K562 (cell line): ENCODE measurements at regions of chr1 and their contacts with region 1.

Region 1: GRCh38 chr1:184075055-184076029 is 23.8 kb downstream of the TSEN15 start:
- DNase-seq: peak; percentile 39 to 61 (median 45)
- ATAC-seq: peak; percentile 90
- H3K4me3 ChIP-seq: no peak overlapping the region
- H3K27ac ChIP-seq: no peak overlapping the region
- H3K4me1 ChIP-seq: no peaks in the 10 kb centered on the region
- H3K27me3 ChIP-seq: no peaks in the 10 kb centered on the region
- CTCF ChIP-seq: peak; percentile 50 to 87 (median 64); a peak in 4 of 6 replicates
- EP300 ChIP-seq: no peak
- POLR2A ChIP-seq: no peak
- RAD21 ChIP-seq: peak; percentile 84 to 86

Region 2: GRCh38 chr1:182087861-182088341 is 1987.4 kb before region 1 on chr1:
- CTCF ChIA-PET with region 1: no interaction called
- POLR2A ChIA-PET with region 1: no interaction called
- in situ Hi-C with region 1: no loop called
- intact Hi-C with region 1: no loop called
- DNase-seq: no peak
- ATAC-seq: no peak
- H3K4me3 ChIP-seq: no peak overlapping the region
- H3K27ac ChIP-seq: no peak overlapping the region
- H3K4me1 ChIP-seq: peaks cover 10 to 20% of the 10 kb centered on the region in 2 experiments; a peak in 4 of 5 replicates
- H3K27me3 ChIP-seq: peaks cover 21 to 53% of the 10 kb centered on the region in 2 experiments; a peak in 4 of 5 replicates
- CTCF ChIP-seq: no peak
- EP300 ChIP-seq: no peak
- POLR2A ChIP-seq: no peak
- RAD21 ChIP-seq: no peak

Region 3: DNA sequence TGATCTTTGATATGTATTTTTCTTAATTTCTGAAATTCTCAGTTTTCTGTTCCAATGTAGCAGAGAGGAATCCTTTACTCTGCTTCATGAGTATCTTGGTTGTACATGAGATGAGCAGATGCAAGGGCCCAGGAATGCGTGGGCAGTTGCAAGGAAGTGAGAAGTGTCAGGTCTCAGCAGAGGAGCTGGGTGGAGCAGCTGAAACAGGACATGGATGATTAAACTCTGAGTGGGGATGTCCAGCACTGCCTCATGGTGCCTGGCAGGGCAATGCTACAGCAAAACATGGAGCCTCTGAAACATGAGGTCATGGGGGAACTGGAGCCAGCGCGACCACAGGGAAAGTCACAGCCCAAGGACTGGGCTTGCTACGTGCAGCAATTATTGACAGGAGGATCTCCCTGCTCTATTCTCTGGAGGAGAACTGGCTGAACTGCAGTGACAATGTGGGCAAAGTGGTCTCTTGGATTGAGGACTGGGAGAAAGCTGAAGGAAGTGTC is 86.2 kb before region 1 on chr1:
- CTCF ChIA-PET with region 1: no interaction called
- POLR2A ChIA-PET with region 1: no interaction called
- in situ Hi-C with region 1: no loop called
- intact Hi-C with region 1: no loop called
- DNase-seq: peak; percentile 58 to 91 (median 71)
- ATAC-seq: peak; percentile 83
- H3K4me3 ChIP-seq: no peak overlapping the region
- H3K27ac ChIP-seq: peak overlapping the region; percentile 67; the same call in 2 of the 3 replicates
- H3K4me1 ChIP-seq: peaks cover 7 to 68% of the 10 kb centered on the region in 2 experiments
- H3K27me3 ChIP-seq: no peaks in the 10 kb centered on the region
- CTCF ChIP-seq: no peak
- EP300 ChIP-seq: peak; percentile 77
- POLR2A ChIP-seq: no peak
- RAD21 ChIP-seq: peak in 1 of 2 experiments; percentile 34; a peak in 2 of 4 replicates

Region 4: GRCh38 chr1:184222652-184223052 is 147.3 kb after region 1 on chr1:
- CTCF ChIA-PET with region 1: interaction called, 20 read pairs
- POLR2A ChIA-PET with region 1: no interaction called
- in situ Hi-C with region 1: no loop called
- intact Hi-C with region 1: loop called (anchors 1 kb)
- DNase-seq: peak; percentile 64 to 71 (median 68)
- ATAC-seq: peak; percentile 77
- H3K4me3 ChIP-seq: no peak overlapping the region
- H3K27ac ChIP-seq: no peak overlapping the region
- H3K4me1 ChIP-seq: no peaks in the 10 kb centered on the region
- H3K27me3 ChIP-seq: peaks cover 14 to 26% of the 10 kb centered on the region in 2 experiments
- CTCF ChIP-seq: peak; percentile 86 to 95 (median 92)
- EP300 ChIP-seq: no peak
- POLR2A ChIP-seq: no peak
- RAD21 ChIP-seq: peak; percentile 87 to 90

Region 5: GRCh38 chr1:184237588-184237987 is 162.2 kb after region 1 on chr1:
- CTCF ChIA-PET with region 1: no interaction called
- POLR2A ChIA-PET with region 1: no interaction called
- in situ Hi-C with region 1: no loop called
- intact Hi-C with region 1: no loop called
- DNase-seq: no peak
- ATAC-seq: no peak
- H3K4me3 ChIP-seq: no peak overlapping the region
- H3K27ac ChIP-seq: no peak overlapping the region
- H3K4me1 ChIP-seq: no peaks in the 10 kb centered on the region; a peak in 1 of 5 replicates
- H3K27me3 ChIP-seq: no peaks in the 10 kb centered on the region
- CTCF ChIP-seq: no peak
- EP300 ChIP-seq: no peak
- POLR2A ChIP-seq: no peak
- RAD21 ChIP-seq: no peak

Region 6: GRCh38 chr1:184465489-184466146 is 390.3 kb after region 1 on chr1:
- CTCF ChIA-PET with region 1: no interaction called
- POLR2A ChIA-PET with region 1: no interaction called
- in situ Hi-C with region 1: no loop called
- intact Hi-C with region 1: loop called (anchors 1 kb)
- DNase-seq: peak in 3 of 4 experiments; percentile 12 to 34 (median 15)
- ATAC-seq: peak; percentile 87
- H3K4me3 ChIP-seq: no peak overlapping the region
- H3K27ac ChIP-seq: no peak overlapping the region
- H3K4me1 ChIP-seq: no peaks in the 10 kb centered on the region
- H3K27me3 ChIP-seq: peaks cover 0 to 5% of the 10 kb centered on the region in 2 experiments; a peak in 1 of 5 replicates
- CTCF ChIP-seq: peak; percentile 54 to 62 (median 54)
- EP300 ChIP-seq: no peak
- POLR2A ChIP-seq: no peak
- RAD21 ChIP-seq: peak; percentile 63 to 73

Region 7: DNA sequence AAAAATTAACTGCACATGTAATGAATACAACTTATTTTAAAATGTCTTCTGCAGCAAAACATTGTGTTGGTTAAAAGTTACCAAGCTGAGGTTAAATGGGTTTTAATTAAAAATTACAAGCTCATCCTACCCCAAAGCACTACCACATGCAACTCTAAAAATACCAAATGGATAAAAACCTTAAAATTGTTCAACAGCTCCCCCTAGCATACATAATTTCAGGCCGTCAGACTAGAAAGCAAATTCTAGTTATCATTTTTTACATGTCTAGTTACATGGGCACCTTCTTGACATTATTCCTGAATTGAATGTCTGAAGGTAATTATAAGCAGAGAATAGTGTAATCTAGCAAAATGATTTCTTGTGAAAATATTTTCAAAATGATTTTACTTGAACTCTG is 488.0 kb after region 1 on chr1:
- CTCF ChIA-PET with region 1: interaction called, 3 read pairs
- POLR2A ChIA-PET with region 1: no interaction called
- in situ Hi-C with region 1: no loop called
- intact Hi-C with region 1: loop called (anchors 10 kb)
- DNase-seq: peak in 1 of 4 experiments; percentile 9
- ATAC-seq: no peak
- H3K4me3 ChIP-seq: no peak overlapping the region
- H3K27ac ChIP-seq: no peak overlapping the region
- H3K4me1 ChIP-seq: no peaks in the 10 kb centered on the region
- H3K27me3 ChIP-seq: no peaks in the 10 kb centered on the region; a peak in 2 of 5 replicates
- CTCF ChIP-seq: peak in 2 of 3 experiments; percentile 39 to 56; a peak in 3 of 6 replicates
- EP300 ChIP-seq: no peak
- POLR2A ChIP-seq: no peak
- RAD21 ChIP-seq: peak; percentile 40 to 65

Region 8: DNA sequence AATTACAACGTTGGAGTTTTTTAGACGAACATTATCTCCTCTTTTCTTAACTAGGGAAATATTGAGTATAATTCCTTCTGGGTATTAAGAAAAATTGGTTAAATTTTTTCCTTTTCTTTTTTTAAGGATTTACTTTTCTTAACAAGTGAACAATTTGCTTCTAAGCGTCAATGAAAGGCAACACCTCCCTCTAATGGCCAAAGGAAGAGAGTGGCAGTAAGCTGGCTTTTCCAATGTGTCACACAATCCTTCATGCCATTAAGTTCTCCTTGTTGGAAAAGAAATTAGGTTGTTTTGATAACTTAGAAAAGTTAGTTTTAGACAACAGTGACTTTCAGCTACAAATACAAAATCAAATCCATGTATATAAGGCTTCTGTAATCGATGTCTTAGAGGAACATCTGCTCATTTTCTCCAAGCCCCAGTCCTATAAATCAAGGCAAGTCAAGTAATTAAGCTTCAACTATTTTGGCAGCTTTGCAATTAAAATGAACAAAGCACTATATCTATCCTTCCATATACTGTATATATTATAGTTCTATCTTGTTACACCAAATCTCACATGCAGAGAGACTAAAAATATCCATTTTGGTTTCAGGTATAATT is 616.5 kb after region 1 on chr1:
- CTCF ChIA-PET with region 1: interaction called, 12 read pairs
- POLR2A ChIA-PET with region 1: no interaction called
- in situ Hi-C with region 1: no loop called
- intact Hi-C with region 1: no loop called
- DNase-seq: peak in 1 of 4 experiments; percentile 44
- ATAC-seq: peak; percentile 74
- H3K4me3 ChIP-seq: no peak overlapping the region
- H3K27ac ChIP-seq: no peak overlapping the region
- H3K4me1 ChIP-seq: no peaks in the 10 kb centered on the region
- H3K27me3 ChIP-seq: no peaks in the 10 kb centered on the region
- CTCF ChIP-seq: peak; percentile 52 to 68 (median 67); a peak in 5 of 6 replicates
- EP300 ChIP-seq: no peak
- POLR2A ChIP-seq: no peak
- RAD21 ChIP-seq: peak; percentile 44 to 60